ENCODE measurements at regions of chr20 and their contacts with region 1.

Region 1: GRCh38 chr20:33653218-33653899 is 8.8 kb upstream of the C20orf144 start:
- DNase-seq: peak; percentile 62
- ATAC-seq: peak; percentile 62 to 74

Region 2: GRCh38 chr20:33391722-33392415 is 261.5 kb before region 1 on chr20:
- intact Hi-C with region 1: loop called in 1 of 2 experiments (anchors 5 kb)
- DNase-seq: no peak
- ATAC-seq: no peak

Region 3: GRCh38 chr20:33460711-33461110 is 192.6 kb before region 1 on chr20:
- intact Hi-C with region 1: loop called (anchors 5 kb)
- DNase-seq: no peak
- ATAC-seq: no peak

Measured in left cardiac atrium (tissue), 4 donors.